ENCODE measurements at regions of chr5 and their contacts with region 1.

Region 1: DNA sequence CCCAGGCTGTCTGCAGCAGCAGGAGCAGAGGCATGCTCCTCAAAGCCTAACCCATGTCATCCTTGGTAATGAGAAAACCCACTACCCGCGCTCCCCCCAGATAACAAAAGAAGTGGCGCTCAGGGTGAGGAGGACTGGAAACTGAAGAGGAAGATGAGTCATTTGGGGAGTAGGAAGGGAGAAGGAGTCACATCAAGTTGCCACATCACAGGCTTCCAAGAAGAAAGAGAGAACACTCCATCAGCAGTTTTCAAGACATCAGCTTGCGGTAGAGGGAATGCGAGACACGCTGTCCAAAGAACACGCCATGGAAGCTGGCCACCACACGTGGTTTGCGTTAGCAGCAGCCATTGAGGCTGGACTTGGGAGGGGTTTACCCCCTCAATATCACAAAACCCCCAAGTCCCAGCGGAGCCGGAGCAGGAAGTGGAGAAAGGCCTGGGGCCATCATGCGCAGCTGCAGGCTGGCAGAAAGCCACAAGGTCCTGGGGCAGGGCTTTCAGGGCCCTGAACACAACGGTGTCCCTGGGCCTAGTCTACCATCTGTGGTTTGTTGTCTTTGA is 41.5 kb downstream of the SH3PXD2B start:
- DNase-seq: peak; percentile 87 to 98 (median 94)
- H3K4me3 ChIP-seq: peak overlapping the region in 2 of 3 experiments; percentile 5 to 15
- H3K4me3 Mint-ChIP-seq: peak overlapping the region; percentile 70 to 86
- H3K27ac ChIP-seq: peak overlapping the region; percentile 81 to 91
- H3K27ac Mint-ChIP-seq: peak overlapping the region; percentile 93 to 99 (median 97)
- H3K4me1 ChIP-seq: peaks cover 62 to 64% of the 10 kb centered on the region in 2 donors
- H3K4me1 Mint-ChIP-seq: peaks cover 66% of the 10 kb centered on the region
- H3K27me3 ChIP-seq: no peaks in the 10 kb centered on the region
- H3K27me3 Mint-ChIP-seq: peaks cover 6 to 10% (median 8%) of the 10 kb centered on the region in 3 donors
- CTCF ChIP-seq: no peak

Region 2: DNA sequence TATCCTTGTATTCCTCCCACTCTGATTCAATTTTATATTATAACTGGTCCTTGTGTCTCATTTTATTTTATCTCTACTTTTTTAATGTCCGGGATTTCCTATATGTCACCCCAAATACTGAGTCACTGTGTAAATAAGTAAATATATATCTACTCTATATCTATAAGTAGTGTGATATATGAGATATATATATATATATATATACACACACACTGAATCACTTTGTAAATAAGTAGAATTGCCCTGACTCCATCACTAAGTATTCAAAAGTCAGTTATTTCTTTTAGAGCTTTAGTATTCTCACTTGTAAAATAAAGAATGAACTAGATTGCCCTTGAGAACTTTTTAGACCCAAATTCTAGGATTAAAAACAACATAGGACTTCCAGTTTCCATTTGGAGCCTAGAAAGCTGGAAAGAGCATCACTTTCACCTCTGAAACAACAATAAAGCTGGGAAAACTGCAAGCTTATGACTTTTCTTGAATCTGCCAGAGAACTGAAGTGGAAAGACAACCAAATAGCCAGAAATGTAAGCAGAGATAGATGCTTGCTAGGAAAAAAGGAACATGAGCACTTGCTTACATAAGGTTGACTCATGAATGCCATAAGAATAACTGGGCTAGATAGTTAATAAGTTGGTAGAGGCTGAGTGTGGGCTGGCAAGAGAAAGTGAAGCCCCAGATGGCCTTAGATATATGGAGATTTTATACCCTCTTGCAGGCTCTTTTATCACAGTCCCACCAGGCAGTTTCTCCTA is 1274.9 kb before region 1 on chr5:
- intact Hi-C with region 1: no loop called
- DNase-seq: no peak
- H3K4me3 ChIP-seq: no peak overlapping the region
- H3K4me3 Mint-ChIP-seq: no peak overlapping the region
- H3K27ac ChIP-seq: no peak overlapping the region
- H3K27ac Mint-ChIP-seq: no peak overlapping the region
- H3K4me1 ChIP-seq: no peaks in the 10 kb centered on the region
- H3K4me1 Mint-ChIP-seq: no peaks in the 10 kb centered on the region
- H3K27me3 ChIP-seq: no peaks in the 10 kb centered on the region
- H3K27me3 Mint-ChIP-seq: peaks cover 0 to 3% (median 0%) of the 10 kb centered on the region in 3 donors
- CTCF ChIP-seq: no peak

Region 3: GRCh38 chr5:171840066-171840465 is 572.7 kb before region 1 on chr5:
- intact Hi-C with region 1: no loop called
- DNase-seq: peak in 1 of 3 donors; percentile 15
- H3K4me3 ChIP-seq: peak overlapping the region in 1 of 3 experiments; percentile 49
- H3K4me3 Mint-ChIP-seq: peak overlapping the region in 1 of 2 donors; percentile 78
- H3K27ac ChIP-seq: peak overlapping the region; percentile 49 to 72
- H3K27ac Mint-ChIP-seq: peak overlapping the region in 4 of 7 donors; percentile 18 to 83 (median 43)
- H3K4me1 ChIP-seq: peaks cover 35 to 43% of the 10 kb centered on the region in 2 donors
- H3K4me1 Mint-ChIP-seq: peaks cover 43% of the 10 kb centered on the region
- H3K27me3 ChIP-seq: no peaks in the 10 kb centered on the region
- H3K27me3 Mint-ChIP-seq: peaks cover 0 to 4% (median 3%) of the 10 kb centered on the region in 3 donors
- CTCF ChIP-seq: no peak

Region 4: GRCh38 chr5:172361566-172362238 is 51.1 kb before region 1 on chr5:
- intact Hi-C with region 1: loop called (anchors 1 to 5 kb)
- DNase-seq: peak; percentile 92 to 99 (median 99)
- H3K4me3 ChIP-seq: no peak overlapping the region
- H3K4me3 Mint-ChIP-seq: peak overlapping the region in 1 of 2 donors; percentile 73
- H3K27ac ChIP-seq: peak overlapping the region; percentile 64 to 78
- H3K27ac Mint-ChIP-seq: peak overlapping the region; percentile 85 to 99 (median 96)
- H3K4me1 ChIP-seq: peaks cover 19 to 26% of the 10 kb centered on the region in 2 donors
- H3K4me1 Mint-ChIP-seq: peaks cover 24% of the 10 kb centered on the region
- H3K27me3 ChIP-seq: no peaks in the 10 kb centered on the region
- H3K27me3 Mint-ChIP-seq: peaks cover 2 to 14% (median 4%) of the 10 kb centered on the region in 3 donors
- CTCF ChIP-seq: no peak

Measured in CD14-positive monocyte (primary cell).